AG04449 (cell line): ENCODE measurements at regions of chr2 and their contacts with region 1.

Region 1: DNA sequence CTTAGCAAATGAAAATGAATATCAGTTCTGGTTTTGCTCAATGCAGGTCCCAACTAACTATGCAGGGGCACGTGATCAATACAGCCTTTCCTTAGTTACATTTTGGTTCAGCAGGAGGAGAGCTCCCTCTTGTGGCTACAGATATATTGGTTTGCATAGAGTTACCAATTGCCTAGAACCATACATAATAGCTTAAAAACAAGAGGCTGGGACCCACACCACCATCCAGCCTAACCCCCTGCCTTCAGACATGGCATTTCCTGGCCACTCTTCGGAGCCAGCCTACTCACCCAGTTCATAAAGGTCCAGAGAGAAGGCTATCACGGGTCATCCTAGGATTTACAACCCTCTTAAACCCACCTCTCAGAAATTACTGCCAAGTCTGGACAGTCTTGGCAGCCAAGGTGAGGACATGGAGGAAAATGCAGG is 10.5 kb downstream of the CCDC93 start:
- DNase-seq: peak; percentile 36
- H3K4me3 ChIP-seq: no peak overlapping the region
- CTCF ChIP-seq: peak; percentile 73

Region 2: GRCh38 chr2:117825437-117825836 is 178.0 kb before region 1 on chr2:
- CTCF ChIA-PET with region 1: interaction called, 519 read pairs
- POLR2A ChIA-PET with region 1: no interaction called
- DNase-seq: no peak
- H3K4me3 ChIP-seq: no peak overlapping the region
- CTCF ChIP-seq: no peak

Region 3: GRCh38 chr2:117917223-117917917 is 86.0 kb before region 1 on chr2:
- CTCF ChIA-PET with region 1: interaction called, 10 read pairs
- POLR2A ChIA-PET with region 1: no interaction called
- DNase-seq: no peak
- H3K4me3 ChIP-seq: no peak overlapping the region
- CTCF ChIP-seq: peak; percentile 38

Region 4: GRCh38 chr2:117949806-117950205 is 53.6 kb before region 1 on chr2:
- CTCF ChIA-PET with region 1: interaction called, 61 read pairs
- POLR2A ChIA-PET with region 1: no interaction called
- DNase-seq: no peak
- H3K4me3 ChIP-seq: no peak overlapping the region
- CTCF ChIP-seq: no peak

Region 5: DNA sequence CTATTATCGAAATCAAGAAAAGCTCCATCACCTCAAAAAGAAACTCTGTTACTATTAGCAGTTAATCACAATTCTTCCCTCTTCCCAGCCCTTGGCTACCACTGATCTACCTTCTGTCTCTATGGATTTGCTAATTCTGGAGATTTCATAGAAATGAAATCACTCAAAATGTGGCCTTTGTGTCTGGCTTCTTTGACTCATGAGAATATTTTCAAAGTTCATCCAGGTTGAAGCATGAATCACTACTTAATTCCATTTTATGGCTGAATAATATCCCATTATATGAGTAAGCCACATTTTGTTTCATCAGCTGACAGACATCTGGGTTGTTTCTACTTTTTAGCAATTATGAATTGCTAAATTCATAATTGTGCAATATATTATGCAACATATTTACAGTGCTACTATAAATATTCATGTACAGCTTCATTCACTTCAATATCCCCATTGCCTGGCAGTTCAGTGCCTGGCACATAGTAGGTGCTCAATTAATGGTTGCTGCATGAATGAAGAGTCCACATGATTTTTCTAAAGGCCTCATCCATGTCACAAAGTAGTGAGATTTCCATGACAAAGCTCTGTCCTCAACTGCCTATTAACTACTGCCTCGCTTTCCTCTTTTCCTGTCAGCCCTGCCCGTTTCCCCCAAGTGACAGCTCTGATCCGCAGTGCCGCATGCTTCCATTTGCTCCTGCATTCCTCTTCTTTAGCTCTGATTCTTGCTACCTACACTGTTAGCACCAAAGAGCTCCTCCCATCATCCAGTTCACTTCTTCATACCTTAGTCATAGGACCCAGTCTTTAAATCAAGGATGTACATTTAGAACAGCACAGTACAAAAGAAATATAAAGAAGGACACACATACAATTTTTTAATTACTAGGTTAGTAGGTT is 22.4 kb before region 1 on chr2:
- CTCF ChIA-PET with region 1: interaction called, 211 read pairs
- POLR2A ChIA-PET with region 1: no interaction called
- DNase-seq: peak; percentile 81
- H3K4me3 ChIP-seq: no peak overlapping the region
- CTCF ChIP-seq: no peak

Region 6: GRCh38 chr2:118061135-118061955 is 57.9 kb after region 1 on chr2:
- CTCF ChIA-PET with region 1: interaction called, 19 read pairs
- POLR2A ChIA-PET with region 1: no interaction called
- DNase-seq: no peak
- H3K4me3 ChIP-seq: no peak overlapping the region
- CTCF ChIP-seq: peak; percentile 36